Activated CD4-positive, alpha-beta memory T cell treated with anti-CD3 and anti-CD28 coated beads, Interleukin-2, amount 10 ng/mL, durations not matched to agents 7 days and 5 days (primary cell): ENCODE measurements at regions of chr11 and their contacts with region 1.

Region 1: DNA sequence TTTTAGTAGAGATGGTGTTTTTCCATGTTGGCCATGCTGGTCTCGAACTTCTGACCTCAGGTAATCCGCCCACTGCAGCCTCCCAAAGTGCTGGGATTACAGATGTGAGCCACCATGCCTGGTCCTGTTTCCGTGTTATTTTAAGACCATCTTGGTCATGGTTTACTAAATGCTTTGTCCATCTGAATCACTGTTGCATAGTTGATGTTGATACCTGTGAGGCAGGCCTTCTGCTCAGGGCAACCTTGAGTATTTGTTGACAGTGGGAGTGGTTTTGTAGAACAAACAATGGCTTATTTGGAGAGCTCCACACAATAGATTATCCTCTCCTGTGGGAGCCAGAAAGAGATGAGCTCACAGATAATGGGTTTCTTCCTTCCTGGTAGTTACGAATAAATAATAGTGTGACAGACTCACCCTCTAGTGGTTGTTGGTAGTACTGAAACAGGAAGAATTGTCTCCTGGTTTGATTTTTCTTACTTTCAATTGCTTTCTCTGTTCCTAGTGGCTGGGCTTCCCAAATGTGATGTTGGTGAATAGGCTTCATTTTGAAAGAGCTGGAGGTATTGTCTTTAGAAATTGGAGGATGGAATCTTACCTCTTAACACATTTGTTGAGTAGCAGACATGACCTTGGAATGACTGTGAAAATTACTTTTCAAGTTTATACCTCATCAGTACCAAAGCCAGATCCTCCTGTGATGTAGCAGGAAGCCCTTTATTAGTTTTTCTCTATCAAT is 39.0 kb downstream of the CTNND1 start:
- DNase-seq: no peak
- H3K4me3 Mint-ChIP-seq: no peak overlapping the region
- H3K27ac Mint-ChIP-seq: peak overlapping the region; percentile 49
- H3K4me1 Mint-ChIP-seq: peaks cover 30% of the 10 kb centered on the region
- H3K27me3 Mint-ChIP-seq: no peaks in the 10 kb centered on the region

Region 2: DNA sequence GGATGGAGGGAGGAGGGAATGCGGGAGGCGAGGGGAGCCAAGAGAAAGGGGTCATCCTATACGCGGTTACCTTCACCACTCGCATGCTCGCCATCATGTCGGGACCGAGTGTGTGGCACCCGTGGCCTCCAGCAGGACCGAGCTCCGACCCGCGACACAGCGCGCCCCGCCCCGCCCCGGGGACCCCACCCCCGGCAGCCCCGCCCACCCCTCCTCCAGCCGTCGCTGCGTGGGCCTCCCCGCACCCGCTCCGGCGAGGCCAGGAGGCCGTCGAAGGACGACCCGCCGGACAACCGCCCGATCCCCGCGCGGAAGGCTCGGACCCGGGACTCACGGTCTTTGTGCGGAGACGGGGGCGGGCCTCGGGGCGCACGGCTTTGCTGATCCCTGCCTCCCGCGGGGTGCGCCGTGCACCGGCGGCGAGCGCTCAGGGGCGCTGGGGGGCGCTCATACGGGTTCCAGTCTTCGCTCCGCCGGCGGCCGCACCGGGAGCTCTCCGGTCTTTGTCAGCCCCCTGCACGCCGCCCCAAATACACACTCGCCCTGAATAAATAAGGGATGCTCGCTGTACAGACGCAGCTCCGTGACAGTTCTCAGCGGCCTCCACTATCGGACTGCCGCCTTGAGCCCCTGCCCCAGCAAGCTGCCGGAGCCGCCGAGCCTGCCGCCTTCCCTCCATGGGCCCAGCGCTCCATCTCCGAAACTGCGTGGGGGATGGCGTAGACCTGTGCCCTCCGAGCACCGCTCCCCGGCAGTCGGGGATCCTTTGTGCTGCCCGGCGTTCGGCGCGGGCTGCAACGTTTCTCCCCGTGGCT is 232.9 kb before region 1 on chr11 and contains the start of gene UBE2L6:
- CTCF ChIA-PET with region 1: interaction called, 25 read pairs
- POLR2A ChIA-PET with region 1: no interaction called
- DNase-seq: peak; percentile 68
- H3K4me3 Mint-ChIP-seq: peak within 1 kb of the TSS; percentile 99
- H3K27ac Mint-ChIP-seq: peak within 1 kb of the TSS; percentile 98
- H3K4me1 Mint-ChIP-seq: peaks cover 30% of the 10 kb centered on the region
- H3K27me3 Mint-ChIP-seq: no peaks in the 10 kb centered on the region
- total RNA-seq, gene UBE2L6: 281 to 285 TPM

Region 3: DNA sequence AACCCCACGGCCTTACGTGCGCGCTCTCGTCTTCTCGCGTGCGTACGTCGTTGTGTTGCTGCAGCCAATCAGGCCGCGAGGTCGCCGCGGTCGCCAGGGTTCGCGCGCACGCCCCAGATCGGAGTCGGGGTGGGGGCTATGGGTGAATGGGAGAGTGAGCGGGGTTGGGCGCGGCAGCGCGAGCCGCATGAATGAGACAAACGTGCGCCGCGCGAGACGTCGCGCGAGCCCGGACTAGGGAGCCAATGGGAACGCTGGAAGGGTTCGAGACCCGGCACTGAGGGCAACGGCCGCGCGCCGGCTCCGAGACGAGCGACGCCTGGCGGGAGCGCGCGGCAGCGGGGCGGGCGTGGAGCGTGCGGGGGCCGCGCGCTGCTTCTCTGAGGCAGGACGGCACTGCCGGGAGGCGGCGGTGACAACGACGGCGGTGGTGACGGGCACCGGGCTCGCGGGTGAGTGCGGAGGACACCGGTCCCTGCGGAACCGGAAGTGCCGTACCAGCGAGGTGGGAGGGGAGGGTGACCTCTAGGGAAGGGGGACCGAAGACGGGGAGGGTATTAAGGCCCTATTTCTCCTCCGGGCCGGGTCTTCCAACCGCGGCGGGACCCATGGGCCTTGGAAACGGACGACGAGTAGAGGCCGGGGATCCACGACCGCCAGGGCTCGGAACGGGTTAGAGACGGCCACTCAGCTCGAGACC is 132.7 kb before region 1 on chr11 and contains the start of gene ZDHHC5:
- CTCF ChIA-PET with region 1: interaction called, 10 read pairs
- POLR2A ChIA-PET with region 1: no interaction called
- DNase-seq: peak; percentile 100
- H3K4me3 Mint-ChIP-seq: peak within 1 kb of the TSS; percentile 99
- H3K27ac Mint-ChIP-seq: peak within 1 kb of the TSS; percentile 99
- H3K4me1 Mint-ChIP-seq: peaks cover 51% of the 10 kb centered on the region
- H3K27me3 Mint-ChIP-seq: no peaks in the 10 kb centered on the region
- total RNA-seq, gene ZDHHC5: 77.6 to 86.6 TPM

Region 4: GRCh38 chr11:57712256-57713150 is 88.1 kb before region 1 on chr11 and contains the start of gene TMX2:
- CTCF ChIA-PET with region 1: interaction called, 20 read pairs
- POLR2A ChIA-PET with region 1: interaction called, 11 read pairs
- DNase-seq: peak; percentile 93
- H3K4me3 Mint-ChIP-seq: peak within 1 kb of the TSS; percentile 98
- H3K27ac Mint-ChIP-seq: peak within 1 kb of the TSS; percentile 90
- H3K4me1 Mint-ChIP-seq: peaks cover 58% of the 10 kb centered on the region
- H3K27me3 Mint-ChIP-seq: no peaks in the 10 kb centered on the region
- total RNA-seq, gene TMX2: 47.0 to 53.6 TPM

Region 5: GRCh38 chr11:57741132-57742086 is 59.2 kb before region 1 on chr11 and contains the start of gene SELENOH:
- CTCF ChIA-PET with region 1: interaction called, 37 read pairs
- POLR2A ChIA-PET with region 1: interaction called, 35 read pairs
- DNase-seq: peak; percentile 96
- H3K4me3 Mint-ChIP-seq: peak within 1 kb of the TSS; percentile 98
- H3K27ac Mint-ChIP-seq: peak within 1 kb of the TSS; percentile 95
- H3K4me1 Mint-ChIP-seq: peaks cover 26% of the 10 kb centered on the region
- H3K27me3 Mint-ChIP-seq: no peaks in the 10 kb centered on the region
- total RNA-seq, gene SELENOH: 148 to 162 TPM

Region 6: DNA sequence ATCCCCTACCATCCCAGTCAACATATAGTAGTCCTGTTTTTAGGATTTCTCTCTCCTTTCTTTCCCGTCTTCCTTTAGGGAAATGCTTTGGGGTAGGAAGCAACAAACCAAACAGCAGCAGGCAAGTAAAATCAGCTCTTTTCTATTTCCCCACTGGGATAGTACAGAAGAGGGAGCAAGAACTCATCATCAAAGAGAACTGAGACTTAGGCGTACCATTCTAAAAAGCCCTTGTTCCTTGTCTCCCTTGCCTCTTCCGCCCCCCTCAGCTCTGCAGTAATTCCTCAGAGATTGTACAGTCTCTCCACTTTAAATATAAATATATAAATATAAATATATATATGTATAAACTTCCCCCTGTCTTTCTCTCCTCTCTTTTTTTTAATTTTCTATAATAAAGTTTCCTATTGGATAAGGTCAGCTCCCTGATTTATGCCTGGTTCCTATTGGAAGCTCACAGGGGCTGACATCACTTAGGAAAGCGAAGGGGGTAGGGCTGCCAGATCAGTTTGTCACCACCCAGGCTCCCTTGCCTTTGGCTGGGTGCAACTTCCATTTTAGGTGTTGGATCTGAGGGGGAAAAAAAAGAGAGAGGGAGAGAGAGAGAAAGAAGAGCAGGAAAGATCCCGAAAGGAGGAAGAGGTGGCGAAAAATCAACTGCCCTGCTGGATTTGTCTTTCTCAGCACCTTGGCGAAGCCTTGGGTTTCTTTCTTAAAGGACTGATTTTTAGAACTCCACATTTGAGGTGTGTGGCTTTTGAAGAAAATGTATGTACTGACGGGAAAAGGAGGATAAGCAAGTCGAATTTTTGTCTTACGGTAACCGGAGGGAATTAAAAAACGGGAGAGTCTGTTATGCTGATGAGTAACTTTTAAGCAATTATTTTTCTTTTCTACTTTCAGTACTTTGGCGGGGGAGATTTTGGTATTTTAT is 39.0 kb before region 1 on chr11 and contains the start of gene CTNND1:
- CTCF ChIA-PET with region 1: interaction called, 19 read pairs
- POLR2A ChIA-PET with region 1: interaction called, 3 read pairs
- DNase-seq: no peak
- H3K4me3 Mint-ChIP-seq: no peak within 1 kb of the TSS
- H3K27ac Mint-ChIP-seq: no peak within 1 kb of the TSS
- H3K4me1 Mint-ChIP-seq: no peaks in the 10 kb centered on the region
- H3K27me3 Mint-ChIP-seq: peaks cover 4% of the 10 kb centered on the region
- total RNA-seq, gene CTNND1: 2.4 to 4.5 TPM

Region 7: GRCh38 chr11:57815476-57815875 is 14.9 kb after region 1 on chr11:
- CTCF ChIA-PET with region 1: interaction called, 13 read pairs
- POLR2A ChIA-PET with region 1: no interaction called
- DNase-seq: no peak
- H3K4me3 Mint-ChIP-seq: no peak overlapping the region
- H3K27ac Mint-ChIP-seq: no peak overlapping the region
- H3K4me1 Mint-ChIP-seq: peaks cover 12% of the 10 kb centered on the region
- H3K27me3 Mint-ChIP-seq: no peaks in the 10 kb centered on the region

Region 8: GRCh38 chr11:57900320-57900719 is 99.7 kb after region 1 on chr11:
- CTCF ChIA-PET with region 1: no interaction called
- POLR2A ChIA-PET with region 1: no interaction called
- DNase-seq: no peak
- H3K4me3 Mint-ChIP-seq: no peak overlapping the region
- H3K27ac Mint-ChIP-seq: no peak overlapping the region
- H3K4me1 Mint-ChIP-seq: no peaks in the 10 kb centered on the region
- H3K27me3 Mint-ChIP-seq: no peaks in the 10 kb centered on the region